OCI-LY7 (cell line): ENCODE measurements at regions of chr6 and their contacts with region 1.

Region 1: GRCh38 chr6:106339334-106340029 is 13.9 kb upstream of the ATG5 start:
- DNase-seq: peak; percentile 65
- H3K4me3 ChIP-seq: no peak overlapping the region
- H3K27ac ChIP-seq: no peak overlapping the region
- H3K4me1 ChIP-seq: no peaks in the 10 kb centered on the region
- CTCF ChIP-seq: peak; percentile 86

Region 2: DNA sequence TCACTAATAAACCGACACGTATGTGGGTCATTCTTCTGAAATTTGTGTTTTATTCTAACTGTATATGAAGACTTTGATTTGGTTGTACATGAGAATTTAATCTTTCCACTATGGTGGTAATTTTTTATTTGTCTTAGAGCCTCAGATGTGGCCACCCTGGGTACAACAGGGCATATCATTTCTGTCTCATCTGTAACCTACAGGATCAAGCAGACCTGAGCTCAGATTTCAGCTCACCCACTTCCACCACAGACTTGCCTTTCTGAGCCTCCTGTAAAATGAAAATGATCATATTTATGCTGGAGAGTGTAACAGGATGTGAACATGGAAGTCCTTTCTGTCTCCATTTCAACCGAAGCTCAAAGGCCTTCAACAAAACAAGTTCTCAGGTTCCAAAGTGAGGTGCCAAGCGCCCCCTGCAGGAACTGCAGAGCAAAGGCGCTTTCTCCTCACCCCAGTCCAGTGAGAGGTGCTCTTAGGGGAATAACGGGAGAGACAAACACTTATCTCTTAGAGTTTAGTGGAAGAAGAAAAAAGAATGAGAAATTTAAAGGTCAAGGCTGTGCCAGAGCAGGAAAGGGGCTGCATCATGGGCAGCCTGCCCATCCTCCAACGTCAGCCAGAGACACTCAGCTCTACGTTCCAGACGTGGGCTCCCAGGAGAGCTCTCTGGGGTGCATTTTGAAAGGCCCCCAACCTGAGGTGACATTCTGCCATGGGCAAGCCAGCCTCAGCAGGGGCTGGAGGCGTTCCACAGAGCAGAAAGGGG is 658.1 kb after region 1 on chr6:
- CTCF ChIA-PET with region 1: interaction called, 5 read pairs
- POLR2A ChIA-PET with region 1: no interaction called
- intact Hi-C with region 1: loop called (anchors 1 kb)
- DNase-seq: peak; percentile 87
- H3K4me3 ChIP-seq: no peak overlapping the region
- H3K27ac ChIP-seq: no peak overlapping the region
- H3K4me1 ChIP-seq: peaks cover 4% of the 10 kb centered on the region
- CTCF ChIP-seq: peak; percentile 99